MCF 10A (cell line): ENCODE measurements at regions of chr10 and their contacts with region 1.

Region 1: DNA sequence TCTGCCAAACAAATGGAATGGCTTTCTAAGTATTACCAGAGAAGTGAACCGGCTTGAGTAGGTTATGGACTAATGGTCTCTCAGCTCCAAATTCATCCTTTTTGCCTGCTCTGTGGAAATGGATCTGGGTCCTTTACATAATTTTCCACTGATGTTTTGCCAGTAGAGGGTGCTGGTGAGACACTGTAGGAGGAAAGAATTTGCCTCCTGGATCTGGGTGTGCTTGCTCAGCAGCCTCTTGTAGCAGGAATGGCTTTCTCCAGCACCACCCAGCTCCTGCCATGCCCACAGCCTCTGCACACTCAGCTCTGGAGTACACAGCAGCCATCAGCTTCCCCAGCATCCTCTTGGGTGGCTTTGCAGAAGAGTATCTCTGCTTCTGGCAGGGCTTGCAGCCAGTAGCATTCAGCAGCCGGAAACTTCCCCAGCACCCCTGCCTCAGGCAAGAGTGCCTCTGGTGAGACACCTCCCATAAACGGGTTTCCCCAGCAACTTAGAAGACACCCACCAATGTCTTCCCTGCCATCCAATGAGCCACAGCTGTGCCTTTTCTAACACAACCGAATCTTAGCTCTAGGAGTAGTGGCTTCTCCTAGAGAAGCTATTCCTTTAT is 235.0 kb upstream of the PLPP4 start:
- DNase-seq: peak; percentile 78
- H3K4me3 Mint-ChIP-seq: no peak overlapping the region
- H3K27ac Mint-ChIP-seq: no peak overlapping the region
- H3K4me1 Mint-ChIP-seq: no peaks in the 10 kb centered on the region
- H3K27me3 Mint-ChIP-seq: peaks cover under 1% of the 10 kb centered on the region
- CTCF ChIP-seq: peak; percentile 82

Region 2: DNA sequence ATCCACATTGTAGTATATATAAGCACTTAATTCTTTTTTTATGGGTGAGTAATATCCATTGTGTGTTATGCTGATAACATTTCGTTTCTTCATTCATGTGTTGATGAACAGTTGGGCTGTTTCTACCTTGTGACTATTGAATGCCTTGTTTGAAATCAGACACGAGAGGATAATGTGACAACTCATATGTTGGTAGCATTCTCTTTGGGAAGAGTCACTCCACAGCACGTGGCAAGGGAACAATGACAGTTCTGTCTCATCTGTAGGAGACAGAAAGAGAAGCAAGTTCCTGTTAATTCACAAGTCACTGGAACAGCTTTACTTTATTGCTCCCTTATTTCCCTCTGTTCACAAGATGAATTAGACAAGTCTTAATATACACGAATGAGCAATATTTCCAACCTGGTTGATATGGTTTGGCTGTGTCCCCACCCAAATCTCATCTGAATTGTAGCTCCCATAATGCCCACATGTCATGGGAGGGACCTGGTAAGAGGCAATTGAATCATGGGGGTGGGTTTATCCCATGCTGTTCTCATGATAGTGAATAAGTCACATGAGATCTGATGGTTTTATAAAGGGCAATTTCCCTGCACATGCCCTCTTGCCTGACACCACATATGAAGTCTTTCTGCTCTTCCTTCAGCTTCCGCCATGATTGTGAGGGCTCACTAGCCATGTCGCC is 204.1 kb before region 1 on chr10:
- CTCF ChIA-PET with region 1: no interaction called
- POLR2A ChIA-PET with region 1: no interaction called
- intact Hi-C with region 1: no loop called
- DNase-seq: no peak
- H3K4me3 Mint-ChIP-seq: no peak overlapping the region
- H3K27ac Mint-ChIP-seq: no peak overlapping the region
- H3K4me1 Mint-ChIP-seq: no peaks in the 10 kb centered on the region
- H3K27me3 Mint-ChIP-seq: peaks cover 68% of the 10 kb centered on the region
- CTCF ChIP-seq: no peak

Region 3: DNA sequence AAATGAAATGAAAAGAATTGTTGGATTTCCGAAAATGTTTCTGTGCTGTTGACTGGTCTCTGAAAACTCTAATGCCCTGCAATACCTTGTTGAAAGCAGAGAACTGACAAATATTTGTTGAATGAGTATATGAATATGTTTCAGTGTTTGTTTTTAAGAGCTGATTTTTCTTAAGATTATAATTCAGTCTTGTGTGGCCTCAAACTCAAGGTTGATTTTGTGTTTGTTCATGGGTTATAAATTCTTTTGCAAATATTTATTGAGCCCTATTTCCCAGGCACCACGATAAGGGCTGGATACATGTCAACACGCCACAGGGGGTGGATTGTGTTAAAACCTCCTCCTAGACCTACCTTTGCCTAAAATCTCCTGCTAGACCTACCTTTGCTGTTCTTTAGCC is 31.2 kb after region 1 on chr10:
- CTCF ChIA-PET with region 1: no interaction called
- POLR2A ChIA-PET with region 1: no interaction called
- intact Hi-C with region 1: no loop called
- DNase-seq: no peak
- H3K4me3 Mint-ChIP-seq: no peak overlapping the region
- H3K27ac Mint-ChIP-seq: no peak overlapping the region
- H3K4me1 Mint-ChIP-seq: no peaks in the 10 kb centered on the region
- H3K27me3 Mint-ChIP-seq: peaks cover 18% of the 10 kb centered on the region
- CTCF ChIP-seq: no peak

Region 4: DNA sequence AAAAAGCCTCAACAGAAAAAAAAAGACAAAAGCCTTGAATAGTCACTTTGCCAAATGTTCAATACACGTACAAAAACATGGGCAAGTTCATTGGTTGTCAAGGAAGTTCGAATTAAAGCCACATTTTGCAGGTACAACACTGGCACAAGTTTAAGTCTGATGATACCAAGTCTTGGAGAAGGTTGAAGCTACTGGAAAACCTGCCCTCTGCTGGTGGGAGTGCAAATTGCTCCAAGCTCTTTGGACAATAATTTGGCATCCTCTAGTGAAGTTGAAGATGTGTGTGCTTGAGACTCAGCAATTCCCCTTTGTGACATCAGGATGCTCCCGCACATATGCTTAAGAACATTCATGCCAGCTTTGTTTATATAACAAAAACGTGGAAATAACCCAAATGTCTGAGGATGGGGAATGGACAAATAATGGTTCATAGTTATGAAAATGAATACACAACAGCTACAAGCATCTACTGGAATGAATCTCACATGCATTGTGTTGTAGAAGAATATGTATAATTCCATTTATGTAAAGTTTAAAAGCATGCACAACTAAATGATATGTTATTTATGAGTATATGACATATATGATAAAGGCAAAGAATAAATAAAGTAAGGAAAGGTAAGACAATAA is 115.0 kb after region 1 on chr10:
- CTCF ChIA-PET with region 1: interaction called, 6 read pairs
- POLR2A ChIA-PET with region 1: no interaction called
- intact Hi-C with region 1: loop called (anchors 1 kb)
- DNase-seq: peak; percentile 66
- H3K4me3 Mint-ChIP-seq: no peak overlapping the region
- H3K27ac Mint-ChIP-seq: no peak overlapping the region
- H3K4me1 Mint-ChIP-seq: no peaks in the 10 kb centered on the region
- H3K27me3 Mint-ChIP-seq: peaks cover 25% of the 10 kb centered on the region
- CTCF ChIP-seq: peak; percentile 64

Region 5: GRCh38 chr10:120735773-120736371 is 513.9 kb after region 1 on chr10:
- CTCF ChIA-PET with region 1: no interaction called
- POLR2A ChIA-PET with region 1: no interaction called
- intact Hi-C with region 1: loop called (anchors 2 kb)
- DNase-seq: peak; percentile 37
- H3K4me3 Mint-ChIP-seq: no peak overlapping the region
- H3K27ac Mint-ChIP-seq: no peak overlapping the region
- H3K4me1 Mint-ChIP-seq: peaks cover 13% of the 10 kb centered on the region
- H3K27me3 Mint-ChIP-seq: peaks cover 45% of the 10 kb centered on the region
- CTCF ChIP-seq: peak; percentile 60

Region 6: GRCh38 chr10:120850911-120851865 is 629.2 kb after region 1 on chr10 and contains the start of gene WDR11:
- CTCF ChIA-PET with region 1: no interaction called
- POLR2A ChIA-PET with region 1: no interaction called
- intact Hi-C with region 1: loop called (anchors 10 kb)
- DNase-seq: peak; percentile 92
- H3K4me3 Mint-ChIP-seq: peak within 1 kb of the TSS; percentile 90
- H3K27ac Mint-ChIP-seq: peak within 1 kb of the TSS; percentile 88
- H3K4me1 Mint-ChIP-seq: peaks cover 26% of the 10 kb centered on the region
- H3K27me3 Mint-ChIP-seq: peaks cover 3% of the 10 kb centered on the region
- CTCF ChIP-seq: no peak
- total RNA-seq, gene WDR11: 49.2 and 61.0 TPM in 2 replicates